Naive thymus-derived CD4-positive, alpha-beta T cell (primary cell): ENCODE measurements at regions of chr7 and their contacts with region 1.

Region 1: GRCh38 chr7:110870926-110871325 is 220.0 kb upstream of the LRRN3 start:
- DNase-seq: no peak
- ATAC-seq: no peak
- H3K4me3 ChIP-seq: no peak overlapping the region
- H3K4me3 Mint-ChIP-seq: no peak overlapping the region
- H3K27ac ChIP-seq: no peak overlapping the region
- H3K27ac Mint-ChIP-seq: no peak overlapping the region
- H3K4me1 ChIP-seq: no peaks in the 10 kb centered on the region
- H3K4me1 Mint-ChIP-seq: peaks cover 0 to 9% (median 0%) of the 10 kb centered on the region in 7 donors
- H3K27me3 ChIP-seq: no peaks in the 10 kb centered on the region
- H3K27me3 Mint-ChIP-seq: no peaks in the 10 kb centered on the region

Region 2: GRCh38 chr7:110766864-110767263 is 104.1 kb before region 1 on chr7:
- CTCF ChIA-PET with region 1: no interaction called
- POLR2A ChIA-PET with region 1: no interaction called
- intact Hi-C with region 1: no loop called
- DNase-seq: no peak
- ATAC-seq: no peak
- H3K4me3 ChIP-seq: no peak overlapping the region
- H3K4me3 Mint-ChIP-seq: no peak overlapping the region
- H3K27ac ChIP-seq: no peak overlapping the region
- H3K27ac Mint-ChIP-seq: no peak overlapping the region
- H3K4me1 ChIP-seq: no peaks in the 10 kb centered on the region
- H3K4me1 Mint-ChIP-seq: peaks cover 0 to 2% (median 0%) of the 10 kb centered on the region in 7 donors
- H3K27me3 ChIP-seq: no peaks in the 10 kb centered on the region
- H3K27me3 Mint-ChIP-seq: peaks cover 0 to 5% (median 0%) of the 10 kb centered on the region in 5 donors

Region 3: GRCh38 chr7:110856704-110857103 is 14.2 kb before region 1 on chr7:
- CTCF ChIA-PET with region 1: interaction called, 10 read pairs
- POLR2A ChIA-PET with region 1: no interaction called
- intact Hi-C with region 1: no loop called
- DNase-seq: no peak
- ATAC-seq: no peak
- H3K4me3 ChIP-seq: no peak overlapping the region
- H3K4me3 Mint-ChIP-seq: no peak overlapping the region
- H3K27ac ChIP-seq: no peak overlapping the region
- H3K27ac Mint-ChIP-seq: no peak overlapping the region
- H3K4me1 ChIP-seq: no peaks in the 10 kb centered on the region
- H3K4me1 Mint-ChIP-seq: peaks cover 0 to 6% (median 0%) of the 10 kb centered on the region in 7 donors
- H3K27me3 ChIP-seq: no peaks in the 10 kb centered on the region
- H3K27me3 Mint-ChIP-seq: no peaks in the 10 kb centered on the region

Region 4: GRCh38 chr7:110947408-110947807 is 76.5 kb after region 1 on chr7:
- CTCF ChIA-PET with region 1: no interaction called
- POLR2A ChIA-PET with region 1: no interaction called
- intact Hi-C with region 1: no loop called
- DNase-seq: no peak
- ATAC-seq: no peak
- H3K4me3 ChIP-seq: no peak overlapping the region
- H3K4me3 Mint-ChIP-seq: no peak overlapping the region
- H3K27ac ChIP-seq: no peak overlapping the region
- H3K27ac Mint-ChIP-seq: no peak overlapping the region
- H3K4me1 ChIP-seq: no peaks in the 10 kb centered on the region
- H3K4me1 Mint-ChIP-seq: peaks cover 0 to 18% (median 14%) of the 10 kb centered on the region in 7 donors
- H3K27me3 ChIP-seq: no peaks in the 10 kb centered on the region
- H3K27me3 Mint-ChIP-seq: no peaks in the 10 kb centered on the region